ENCODE measurements at regions of chr19 and their contacts with region 1.

Region 1: GRCh38 chr19:32971715-32972540 is at the starts of genes CEP89 and FAAP24:
- DNase-seq: peak; percentile 100
- ATAC-seq: peak; percentile 99
- H3K4me3 ChIP-seq: peak within 1 kb of the TSS; percentile 49 to 84 (median 80)
- H3K4me3 Mint-ChIP-seq: peak within 1 kb of the TSS; percentile 99
- H3K27ac ChIP-seq: peak within 1 kb of the TSS; percentile 85 to 92
- H3K27ac Mint-ChIP-seq: peak within 1 kb of the TSS; percentile 98
- H3K4me1 ChIP-seq: peaks cover 8 to 16% of the 10 kb centered on the region in 2 donors
- H3K4me1 Mint-ChIP-seq: peaks cover 18% of the 10 kb centered on the region
- H3K27me3 ChIP-seq: no peaks in the 10 kb centered on the region
- H3K27me3 Mint-ChIP-seq: no peaks in the 10 kb centered on the region
- CTCF ChIP-seq: no peak
- total RNA-seq, gene CEP89: 27.1 and 38.6 TPM in 2 replicates
- total RNA-seq, gene FAAP24: 1.4 and 2.7 TPM in 2 replicates

Region 2: GRCh38 chr19:32405431-32406161 is 566.3 kb before region 1 on chr19 and contains the start of gene DPY19L3:
- CTCF ChIA-PET with region 1: no interaction called
- POLR2A ChIA-PET with region 1: no interaction called
- intact Hi-C with region 1: loop called (anchors 5 kb)
- DNase-seq: peak; percentile 93
- ATAC-seq: peak; percentile 89
- H3K4me3 ChIP-seq: peak within 1 kb of the TSS; percentile 66 to 89 (median 80)
- H3K4me3 Mint-ChIP-seq: peak within 1 kb of the TSS; percentile 92
- H3K27ac ChIP-seq: peak within 1 kb of the TSS; percentile 74 to 93
- H3K27ac Mint-ChIP-seq: peak within 1 kb of the TSS; percentile 94
- H3K4me1 ChIP-seq: peaks cover 11 to 19% of the 10 kb centered on the region in 2 donors
- H3K4me1 Mint-ChIP-seq: peaks cover 15% of the 10 kb centered on the region
- H3K27me3 ChIP-seq: no peaks in the 10 kb centered on the region
- H3K27me3 Mint-ChIP-seq: no peaks in the 10 kb centered on the region
- CTCF ChIP-seq: no peak
- total RNA-seq, gene DPY19L3: 33.3 and 40.0 TPM in 2 replicates

Region 3: GRCh38 chr19:32580901-32581703 is 390.8 kb before region 1 on chr19 and contains the start of gene PDCD5:
- CTCF ChIA-PET with region 1: no interaction called
- POLR2A ChIA-PET with region 1: no interaction called
- intact Hi-C with region 1: loop called (anchors 5 kb)
- DNase-seq: peak; percentile 96
- ATAC-seq: peak; percentile 94
- H3K4me3 ChIP-seq: peak within 1 kb of the TSS; percentile 51 to 85 (median 73)
- H3K4me3 Mint-ChIP-seq: peak within 1 kb of the TSS; percentile 96
- H3K27ac ChIP-seq: peak within 1 kb of the TSS in 1 of 2 donors; percentile 78
- H3K27ac Mint-ChIP-seq: peak within 1 kb of the TSS; percentile 95
- H3K4me1 ChIP-seq: peaks cover 13 to 19% of the 10 kb centered on the region in 2 donors
- H3K4me1 Mint-ChIP-seq: peaks cover 18% of the 10 kb centered on the region
- H3K27me3 ChIP-seq: no peaks in the 10 kb centered on the region
- H3K27me3 Mint-ChIP-seq: peaks cover 4% of the 10 kb centered on the region
- CTCF ChIP-seq: no peak
- total RNA-seq, gene PDCD5: 39.5 and 43.2 TPM in 2 replicates

Region 4: DNA sequence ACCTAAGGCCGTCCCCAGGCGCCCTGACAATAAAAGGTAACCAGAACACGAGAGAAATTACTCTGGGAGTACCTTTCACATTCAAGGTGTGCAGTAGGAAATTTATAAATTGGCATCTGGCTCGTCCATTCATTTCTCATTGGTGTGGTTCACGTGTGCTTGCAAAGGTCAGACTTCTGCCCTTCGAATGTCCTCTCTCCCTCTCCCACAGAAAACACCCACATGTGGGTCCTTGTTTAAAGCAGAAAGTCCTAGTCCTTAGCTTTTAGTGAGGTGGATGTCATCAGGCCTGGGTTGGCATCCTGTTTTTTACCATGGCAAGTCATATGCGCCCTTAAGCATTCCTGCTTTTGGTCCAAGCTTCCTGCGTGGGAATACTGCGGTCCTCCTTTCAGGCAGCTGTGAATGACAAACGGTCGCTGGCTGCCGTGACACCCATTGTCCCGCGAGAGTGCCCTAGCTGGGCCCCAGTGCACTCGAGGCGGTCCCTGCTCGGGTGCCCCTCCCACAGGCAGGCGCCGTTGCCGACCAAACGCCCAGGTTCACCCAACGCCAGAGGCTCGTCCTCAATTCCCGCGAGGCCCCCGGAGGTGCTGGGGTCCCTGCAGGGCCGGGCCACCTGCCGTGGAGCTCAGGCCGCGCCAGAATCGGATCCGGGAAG is 280.5 kb before region 1 on chr19 and contains the start of gene NUDT19:
- CTCF ChIA-PET with region 1: no interaction called
- POLR2A ChIA-PET with region 1: no interaction called
- intact Hi-C with region 1: loop called (anchors 2 kb)
- DNase-seq: peak; percentile 82
- ATAC-seq: peak; percentile 92
- H3K4me3 ChIP-seq: peak within 1 kb of the TSS; percentile 8 to 77 (median 66)
- H3K4me3 Mint-ChIP-seq: peak within 1 kb of the TSS; percentile 91
- H3K27ac ChIP-seq: peak within 1 kb of the TSS; percentile 37 to 70
- H3K27ac Mint-ChIP-seq: peak within 1 kb of the TSS; percentile 88
- H3K4me1 ChIP-seq: peaks cover 19 to 31% of the 10 kb centered on the region in 2 donors
- H3K4me1 Mint-ChIP-seq: peaks cover 45% of the 10 kb centered on the region
- H3K27me3 ChIP-seq: no peaks in the 10 kb centered on the region
- H3K27me3 Mint-ChIP-seq: no peaks in the 10 kb centered on the region
- CTCF ChIP-seq: no peak
- total RNA-seq, gene NUDT19: 7.1 and 8.9 TPM in 2 replicates

Region 5: DNA sequence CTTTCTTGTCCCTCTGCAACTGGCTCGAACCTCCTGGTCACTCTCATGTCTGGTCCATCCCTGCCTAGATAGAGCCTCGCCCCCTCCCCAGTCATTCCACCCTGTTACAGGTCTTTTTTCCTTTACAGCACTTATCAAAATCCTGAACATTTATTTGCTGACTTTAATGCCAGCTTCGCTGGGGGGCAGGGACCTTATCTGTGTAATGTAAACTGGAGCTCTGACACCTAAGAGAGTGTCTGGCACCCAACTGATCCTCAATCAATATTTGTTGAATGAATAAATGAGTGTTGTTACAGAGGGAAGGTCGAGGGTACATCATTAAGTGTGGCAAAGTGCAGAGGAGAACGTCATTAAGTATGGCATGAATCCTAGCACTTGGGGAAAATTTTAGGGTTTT is 16.8 kb after region 1 on chr19:
- CTCF ChIA-PET with region 1: no interaction called
- POLR2A ChIA-PET with region 1: no interaction called
- intact Hi-C with region 1: no loop called
- DNase-seq: no peak
- ATAC-seq: no peak
- H3K4me3 ChIP-seq: no peak overlapping the region
- H3K4me3 Mint-ChIP-seq: no peak overlapping the region
- H3K27ac ChIP-seq: no peak overlapping the region
- H3K27ac Mint-ChIP-seq: no peak overlapping the region
- H3K4me1 ChIP-seq: no peaks in the 10 kb centered on the region
- H3K4me1 Mint-ChIP-seq: no peaks in the 10 kb centered on the region
- H3K27me3 ChIP-seq: no peaks in the 10 kb centered on the region
- H3K27me3 Mint-ChIP-seq: no peaks in the 10 kb centered on the region
- CTCF ChIP-seq: no peak

Region 6: GRCh38 chr19:33064792-33065550 is 93.0 kb after region 1 on chr19 and contains the start of gene RHPN2:
- CTCF ChIA-PET with region 1: no interaction called
- POLR2A ChIA-PET with region 1: no interaction called
- intact Hi-C with region 1: loop called (anchors 5 kb)
- DNase-seq: peak; percentile 68
- ATAC-seq: peak; percentile 88
- H3K4me3 ChIP-seq: peak within 1 kb of the TSS in 4 of 5 experiments; percentile 44 to 65 (median 56)
- H3K4me3 Mint-ChIP-seq: peak within 1 kb of the TSS; percentile 79
- H3K27ac ChIP-seq: no peak within 1 kb of the TSS
- H3K27ac Mint-ChIP-seq: peak within 1 kb of the TSS; percentile 61
- H3K4me1 ChIP-seq: peaks cover 15 to 20% of the 10 kb centered on the region in 2 donors
- H3K4me1 Mint-ChIP-seq: peaks cover 7% of the 10 kb centered on the region
- H3K27me3 ChIP-seq: peaks cover 0 to 22% (median 2%) of the 10 kb centered on the region in 4 experiments
- H3K27me3 Mint-ChIP-seq: peaks cover 7% of the 10 kb centered on the region
- CTCF ChIP-seq: no peak
- total RNA-seq, gene RHPN2: 5.2 and 5.5 TPM in 2 replicates

Region 7: DNA sequence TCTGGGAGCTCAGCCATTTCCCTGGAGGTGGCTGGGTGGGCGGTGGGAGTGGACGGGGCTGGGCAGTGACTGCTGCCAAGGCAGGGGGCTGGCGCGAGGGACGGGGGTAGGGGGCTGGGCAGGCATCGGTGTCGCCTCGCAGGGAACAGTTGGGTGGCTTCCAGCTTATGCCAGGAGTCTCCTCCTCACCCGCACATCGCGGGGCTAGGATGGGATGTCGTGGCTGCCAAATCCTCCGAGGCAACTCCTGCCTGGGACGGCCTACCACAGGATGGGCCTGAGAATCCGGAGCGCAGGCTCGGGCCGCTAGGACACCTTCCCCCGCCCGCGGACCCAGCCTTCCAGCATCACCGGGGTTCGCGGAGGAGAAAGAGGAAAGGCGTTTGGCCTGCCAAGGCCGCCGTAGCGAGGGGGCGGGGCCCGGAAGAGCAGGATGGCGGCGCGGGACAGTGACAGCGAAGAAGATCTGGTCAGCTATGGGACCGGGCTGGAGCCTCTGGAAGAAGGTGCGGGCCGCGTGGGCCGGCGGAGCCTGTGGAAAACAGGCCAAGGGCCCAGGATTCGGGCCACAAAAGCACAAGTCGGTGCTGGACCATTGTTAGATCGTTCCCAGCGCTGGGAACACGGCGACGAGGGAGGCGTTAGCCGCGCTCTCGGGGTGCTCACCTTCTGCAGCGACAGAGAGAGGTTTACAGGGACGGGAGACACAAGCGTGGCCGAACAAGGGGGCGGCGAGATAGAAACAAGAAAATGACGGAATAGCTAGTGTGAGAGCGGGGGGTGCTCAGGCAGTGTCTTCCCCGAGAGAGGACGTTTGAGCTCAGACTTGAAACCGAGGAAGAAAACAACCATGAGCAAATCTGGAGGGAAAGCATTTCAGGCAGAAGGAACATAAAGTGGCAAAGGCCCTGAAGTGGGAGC is 109.1 kb after region 1 on chr19 and contains the start of gene GPATCH1:
- CTCF ChIA-PET with region 1: no interaction called
- POLR2A ChIA-PET with region 1: interaction called, 3 read pairs
- intact Hi-C with region 1: loop called (anchors 1 kb)
- DNase-seq: peak; percentile 89
- ATAC-seq: peak; percentile 97
- H3K4me3 ChIP-seq: peak within 1 kb of the TSS; percentile 75 to 98 (median 90)
- H3K4me3 Mint-ChIP-seq: peak within 1 kb of the TSS; percentile 93
- H3K27ac ChIP-seq: peak within 1 kb of the TSS; percentile 62 to 85
- H3K27ac Mint-ChIP-seq: peak within 1 kb of the TSS; percentile 93
- H3K4me1 ChIP-seq: peaks cover 9 to 15% of the 10 kb centered on the region in 2 donors
- H3K4me1 Mint-ChIP-seq: peaks cover 19% of the 10 kb centered on the region
- H3K27me3 ChIP-seq: no peaks in the 10 kb centered on the region
- H3K27me3 Mint-ChIP-seq: no peaks in the 10 kb centered on the region
- CTCF ChIP-seq: no peak
- total RNA-seq, gene GPATCH1: 14.6 and 16.9 TPM in 2 replicates

Region 8: GRCh38 chr19:33125929-33126388 is 154.0 kb after region 1 on chr19:
- CTCF ChIA-PET with region 1: interaction called, 5 read pairs
- POLR2A ChIA-PET with region 1: no interaction called
- intact Hi-C with region 1: loop called (anchors 2 kb)
- DNase-seq: peak; percentile 70
- ATAC-seq: peak; percentile 75
- H3K4me3 ChIP-seq: no peak overlapping the region
- H3K4me3 Mint-ChIP-seq: no peak overlapping the region
- H3K27ac ChIP-seq: no peak overlapping the region
- H3K27ac Mint-ChIP-seq: no peak overlapping the region
- H3K4me1 ChIP-seq: peaks cover 0 to 2% of the 10 kb centered on the region in 2 donors
- H3K4me1 Mint-ChIP-seq: peaks cover 6% of the 10 kb centered on the region
- H3K27me3 ChIP-seq: no peaks in the 10 kb centered on the region
- H3K27me3 Mint-ChIP-seq: no peaks in the 10 kb centered on the region
- CTCF ChIP-seq: peak; percentile 88